ENCODE measurements at regions of chr16 and their contacts with region 1.

Region 1: GRCh38 chr16:64089697-64090096 is 1032.2 kb downstream of the CDH11 start:
- DNase-seq: peak; percentile 51
- H3K4me3 Mint-ChIP-seq: no peak overlapping the region
- H3K27ac Mint-ChIP-seq: no peak overlapping the region
- H3K4me1 Mint-ChIP-seq: peaks cover 6% of the 10 kb centered on the region
- H3K27me3 Mint-ChIP-seq: no peaks in the 10 kb centered on the region
- CTCF ChIP-seq: peak; percentile 64

Region 2: DNA sequence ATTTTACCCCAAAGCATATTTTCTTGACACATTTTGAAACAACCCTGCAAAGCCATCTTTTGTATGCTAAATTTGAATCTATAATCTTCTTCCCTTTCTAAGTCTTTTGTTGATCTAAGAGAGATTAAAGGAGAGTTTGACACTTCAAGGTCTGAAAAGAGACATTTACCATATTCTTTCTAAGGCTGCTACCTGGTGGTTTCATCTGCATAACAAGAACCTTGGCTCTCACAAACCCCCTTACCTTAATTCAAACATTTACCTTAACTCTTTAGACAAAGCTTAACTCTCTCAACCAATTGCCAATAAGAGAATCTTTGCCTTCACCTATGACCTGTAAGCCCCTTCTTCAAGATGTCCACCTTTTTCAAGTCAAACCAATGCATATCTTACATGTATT is 111.5 kb before region 1 on chr16:
- CTCF ChIA-PET with region 1: no interaction called
- POLR2A ChIA-PET with region 1: no interaction called
- intact Hi-C with region 1: no loop called
- DNase-seq: no peak
- H3K4me3 Mint-ChIP-seq: no peak overlapping the region
- H3K27ac Mint-ChIP-seq: no peak overlapping the region
- H3K4me1 Mint-ChIP-seq: no peaks in the 10 kb centered on the region
- H3K27me3 Mint-ChIP-seq: no peaks in the 10 kb centered on the region
- CTCF ChIP-seq: no peak

Region 3: DNA sequence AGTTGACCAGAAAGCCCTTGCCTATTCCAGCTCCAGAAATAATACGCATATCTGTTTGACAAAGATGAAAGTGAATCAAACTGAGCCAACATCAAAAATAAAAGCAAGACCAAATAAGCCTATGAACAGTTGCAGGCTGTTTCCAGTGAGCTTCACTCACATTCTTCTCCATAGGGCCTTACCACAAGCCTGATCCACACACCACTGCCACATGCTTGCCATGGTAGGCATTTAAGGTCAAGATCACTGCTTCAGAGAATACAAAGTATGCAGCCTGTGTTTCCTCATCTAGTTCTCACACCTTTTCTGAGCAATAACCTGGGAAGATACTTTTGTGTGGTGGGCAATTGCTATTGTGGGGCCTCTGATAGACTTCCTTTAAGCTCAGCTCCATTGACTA is 28.1 kb before region 1 on chr16:
- CTCF ChIA-PET with region 1: no interaction called
- POLR2A ChIA-PET with region 1: no interaction called
- intact Hi-C with region 1: no loop called
- DNase-seq: no peak
- H3K4me3 Mint-ChIP-seq: no peak overlapping the region
- H3K27ac Mint-ChIP-seq: no peak overlapping the region
- H3K4me1 Mint-ChIP-seq: no peaks in the 10 kb centered on the region
- H3K27me3 Mint-ChIP-seq: no peaks in the 10 kb centered on the region
- CTCF ChIP-seq: no peak

Region 4: DNA sequence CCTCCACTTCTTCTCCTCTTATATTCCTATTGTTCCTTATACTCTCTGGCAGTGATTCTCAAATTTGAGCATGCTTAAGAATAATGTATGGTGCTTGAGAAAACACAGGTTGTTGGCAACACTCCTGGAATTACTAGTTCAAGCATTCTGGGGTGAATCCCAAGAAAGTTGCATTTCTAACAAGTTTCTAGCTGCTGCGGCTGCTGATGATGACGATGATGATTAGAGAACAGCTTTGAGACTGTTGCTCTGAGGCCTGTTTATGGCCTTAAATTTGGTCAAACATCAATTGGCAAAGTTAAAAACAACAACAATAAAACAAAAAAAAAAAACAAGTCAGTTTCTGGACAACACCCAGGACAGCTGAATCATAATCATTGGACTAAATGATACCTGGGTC is 70.3 kb after region 1 on chr16:
- CTCF ChIA-PET with region 1: interaction called, 3 read pairs
- POLR2A ChIA-PET with region 1: no interaction called
- intact Hi-C with region 1: loop called (anchors 5 kb)
- DNase-seq: peak; percentile 66
- H3K4me3 Mint-ChIP-seq: no peak overlapping the region
- H3K27ac Mint-ChIP-seq: no peak overlapping the region
- H3K4me1 Mint-ChIP-seq: peaks cover 11% of the 10 kb centered on the region
- H3K27me3 Mint-ChIP-seq: no peaks in the 10 kb centered on the region
- CTCF ChIP-seq: no peak

Region 5: DNA sequence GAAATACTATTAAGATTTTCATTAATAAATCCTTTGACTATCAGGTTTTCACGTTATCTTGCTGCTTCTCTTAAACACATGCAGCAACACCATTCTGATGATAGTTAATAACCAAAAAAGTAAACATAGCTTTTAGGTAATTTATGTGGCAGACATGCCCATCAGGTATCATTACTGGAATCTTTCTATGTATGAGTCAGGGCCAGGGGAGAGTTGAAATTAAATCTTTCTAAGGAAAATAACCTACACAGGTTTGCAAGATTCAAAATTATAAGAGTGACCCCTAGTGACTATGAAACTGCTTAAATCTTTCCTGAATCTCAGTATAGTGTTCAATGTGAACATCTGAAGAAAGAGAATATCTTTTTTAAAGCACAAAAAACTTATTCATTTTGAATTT is 365.6 kb after region 1 on chr16:
- CTCF ChIA-PET with region 1: interaction called, 9 read pairs
- POLR2A ChIA-PET with region 1: interaction called, 7 read pairs
- intact Hi-C with region 1: loop called (anchors 1 kb)
- DNase-seq: peak; percentile 23
- H3K4me3 Mint-ChIP-seq: no peak overlapping the region
- H3K27ac Mint-ChIP-seq: no peak overlapping the region
- H3K4me1 Mint-ChIP-seq: peaks cover under 1% of the 10 kb centered on the region
- H3K27me3 Mint-ChIP-seq: no peaks in the 10 kb centered on the region
- CTCF ChIP-seq: peak; percentile 23